ENCODE measurements at regions of chr20 and their contacts with region 1.

Region 1: GRCh38 chr20:20568604-20569205 is 143.7 kb downstream of the RALGAPA2 start:
- DNase-seq: peak; percentile 52
- H3K4me3 Mint-ChIP-seq: no peak overlapping the region
- H3K27ac Mint-ChIP-seq: no peak overlapping the region
- H3K4me1 Mint-ChIP-seq: peaks cover 2% of the 10 kb centered on the region
- H3K27me3 Mint-ChIP-seq: no peaks in the 10 kb centered on the region

Region 2: DNA sequence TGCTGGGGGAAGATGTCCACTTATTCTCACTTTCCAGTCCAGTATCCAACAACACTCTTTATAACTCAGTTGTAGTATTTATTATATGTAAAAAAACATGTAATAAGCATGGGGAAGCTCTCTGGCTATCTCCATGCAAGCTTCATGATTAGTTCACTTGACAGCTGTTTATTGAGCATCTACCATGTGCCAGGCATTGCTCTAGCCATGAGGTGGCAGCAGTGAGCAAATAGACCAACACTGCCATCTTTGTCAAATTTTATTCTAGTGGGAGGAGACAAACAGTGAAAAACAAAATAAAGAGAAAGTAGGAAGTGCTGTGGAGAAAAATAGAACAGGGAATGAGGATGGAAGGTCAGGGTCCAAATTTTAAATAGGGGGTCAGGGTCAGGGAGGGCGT is 384.6 kb before region 1 on chr20:
- CTCF ChIA-PET with region 1: interaction called, 9 read pairs
- POLR2A ChIA-PET with region 1: no interaction called
- intact Hi-C with region 1: loop called (anchors 10 kb)
- DNase-seq: peak; percentile 17
- H3K4me3 Mint-ChIP-seq: no peak overlapping the region
- H3K27ac Mint-ChIP-seq: no peak overlapping the region
- H3K4me1 Mint-ChIP-seq: no peaks in the 10 kb centered on the region
- H3K27me3 Mint-ChIP-seq: peaks cover 6% of the 10 kb centered on the region

Region 3: DNA sequence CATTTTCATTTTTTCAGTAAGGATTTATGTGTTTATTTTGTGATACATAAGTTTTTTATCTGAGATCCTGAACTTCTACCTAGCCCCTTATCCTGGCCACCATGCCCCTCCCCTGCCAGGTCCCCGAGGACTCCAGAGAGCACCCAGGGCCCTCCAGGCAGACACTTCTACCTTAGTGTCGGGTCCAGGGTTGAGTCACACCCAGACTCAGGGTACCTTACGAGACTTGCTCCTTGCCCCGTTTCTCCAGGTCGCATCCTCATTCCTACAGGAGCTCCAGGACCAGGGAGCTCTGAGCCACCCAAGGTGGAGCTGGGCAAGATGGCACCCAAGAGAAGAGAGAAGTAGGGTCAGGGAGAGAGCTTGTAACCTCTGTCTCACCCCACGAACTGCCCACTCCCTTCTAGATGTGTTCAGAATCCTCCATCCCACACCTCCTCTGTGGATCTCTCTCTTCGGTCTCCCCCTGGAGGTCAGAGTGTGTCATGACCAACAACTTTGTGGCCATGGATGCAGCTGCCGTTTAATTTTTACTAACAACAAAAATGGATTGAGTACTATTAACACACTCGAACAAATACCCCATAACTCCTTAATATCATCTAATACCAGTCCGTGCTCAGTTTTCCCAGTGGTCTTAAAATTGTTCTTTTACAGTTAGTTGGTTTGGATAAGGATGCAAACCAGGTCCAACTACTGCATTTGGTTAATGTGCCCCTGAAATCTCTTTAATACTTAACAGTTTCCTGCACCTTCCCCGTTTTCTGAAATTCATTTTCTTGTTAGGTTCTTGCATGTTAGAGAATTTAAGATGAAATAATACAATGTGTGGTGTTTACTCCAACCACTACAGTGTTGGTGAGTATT is 331.4 kb before region 1 on chr20:
- CTCF ChIA-PET with region 1: interaction called, 5 read pairs
- POLR2A ChIA-PET with region 1: interaction called, 4 read pairs
- intact Hi-C with region 1: loop called (anchors 5 kb)
- DNase-seq: peak; percentile 43
- H3K4me3 Mint-ChIP-seq: no peak overlapping the region
- H3K27ac Mint-ChIP-seq: no peak overlapping the region
- H3K4me1 Mint-ChIP-seq: no peaks in the 10 kb centered on the region
- H3K27me3 Mint-ChIP-seq: peaks cover 3% of the 10 kb centered on the region

Region 4: GRCh38 chr20:20452254-20452676 is 116.4 kb before region 1 on chr20:
- CTCF ChIA-PET with region 1: interaction called, 3 read pairs
- POLR2A ChIA-PET with region 1: no interaction called
- intact Hi-C with region 1: loop called (anchors 5 kb)
- DNase-seq: peak; percentile 87
- H3K4me3 Mint-ChIP-seq: peak overlapping the region; percentile 72
- H3K27ac Mint-ChIP-seq: peak overlapping the region; percentile 71
- H3K4me1 Mint-ChIP-seq: peaks cover 49% of the 10 kb centered on the region
- H3K27me3 Mint-ChIP-seq: no peaks in the 10 kb centered on the region

Measured in activated CD4-positive, alpha-beta memory T cell treated with anti-CD3 and anti-CD28 coated beads for 36 hours (primary cell).